ENCODE measurements at regions of chr11 and their contacts with region 1.

Region 1: DNA sequence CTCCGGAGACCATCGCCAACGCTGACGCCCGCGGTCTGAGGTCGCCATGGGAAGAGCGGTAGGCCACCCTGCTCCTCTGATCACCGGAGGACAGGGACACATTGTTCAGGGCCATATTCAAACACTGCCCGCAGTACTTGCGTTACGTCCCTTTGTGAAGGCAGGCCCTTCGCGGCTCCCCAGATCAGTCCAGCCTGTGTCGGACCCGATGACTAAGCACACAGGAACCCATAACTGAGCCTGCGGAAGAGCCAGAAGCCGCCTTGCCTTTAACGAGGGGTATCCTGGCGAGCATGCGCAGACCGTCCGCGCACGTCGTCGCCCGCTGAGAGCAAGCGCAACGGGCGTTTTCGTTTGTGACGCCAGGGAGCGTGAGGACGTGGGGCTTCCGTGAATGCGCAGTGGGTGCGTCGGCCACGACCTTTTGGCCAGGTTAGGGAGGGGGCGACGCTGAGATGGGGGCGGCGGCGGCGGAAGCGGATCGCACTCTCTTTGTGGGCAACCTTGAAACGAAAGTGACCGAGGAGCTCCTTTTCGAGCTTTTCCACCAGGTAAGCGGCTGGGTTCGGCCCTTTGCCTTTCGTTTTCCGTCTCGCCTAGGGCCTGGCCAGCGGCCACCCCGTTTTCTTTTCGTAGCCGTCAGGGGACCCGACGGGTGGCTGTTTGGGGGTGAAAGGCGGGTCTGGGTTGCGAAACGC is at the starts of genes C11orf71 and RBM7:
- DNase-seq: peak; percentile 99
- H3K4me3 ChIP-seq: peak within 1 kb of the TSS; percentile 73 to 88 (median 78)
- H3K27ac ChIP-seq: peak within 1 kb of the TSS; percentile 95 to 98 (median 98)
- H3K4me1 ChIP-seq: peaks cover 41 to 67% (median 60%) of the 10 kb centered on the region in 4 donors
- H3K27me3 ChIP-seq: no peaks in the 10 kb centered on the region
- CTCF ChIP-seq: peak in 1 of 3 experiments; percentile 17
- EP300 ChIP-seq: no peak
- POLR2A ChIP-seq: peak; percentile 76
- total RNA-seq, gene C11orf71: 5.0 to 6.2 (median 5.6) TPM
- total RNA-seq, gene RBM7: 13.7 to 28.0 (median 17.6) TPM

Region 2: DNA sequence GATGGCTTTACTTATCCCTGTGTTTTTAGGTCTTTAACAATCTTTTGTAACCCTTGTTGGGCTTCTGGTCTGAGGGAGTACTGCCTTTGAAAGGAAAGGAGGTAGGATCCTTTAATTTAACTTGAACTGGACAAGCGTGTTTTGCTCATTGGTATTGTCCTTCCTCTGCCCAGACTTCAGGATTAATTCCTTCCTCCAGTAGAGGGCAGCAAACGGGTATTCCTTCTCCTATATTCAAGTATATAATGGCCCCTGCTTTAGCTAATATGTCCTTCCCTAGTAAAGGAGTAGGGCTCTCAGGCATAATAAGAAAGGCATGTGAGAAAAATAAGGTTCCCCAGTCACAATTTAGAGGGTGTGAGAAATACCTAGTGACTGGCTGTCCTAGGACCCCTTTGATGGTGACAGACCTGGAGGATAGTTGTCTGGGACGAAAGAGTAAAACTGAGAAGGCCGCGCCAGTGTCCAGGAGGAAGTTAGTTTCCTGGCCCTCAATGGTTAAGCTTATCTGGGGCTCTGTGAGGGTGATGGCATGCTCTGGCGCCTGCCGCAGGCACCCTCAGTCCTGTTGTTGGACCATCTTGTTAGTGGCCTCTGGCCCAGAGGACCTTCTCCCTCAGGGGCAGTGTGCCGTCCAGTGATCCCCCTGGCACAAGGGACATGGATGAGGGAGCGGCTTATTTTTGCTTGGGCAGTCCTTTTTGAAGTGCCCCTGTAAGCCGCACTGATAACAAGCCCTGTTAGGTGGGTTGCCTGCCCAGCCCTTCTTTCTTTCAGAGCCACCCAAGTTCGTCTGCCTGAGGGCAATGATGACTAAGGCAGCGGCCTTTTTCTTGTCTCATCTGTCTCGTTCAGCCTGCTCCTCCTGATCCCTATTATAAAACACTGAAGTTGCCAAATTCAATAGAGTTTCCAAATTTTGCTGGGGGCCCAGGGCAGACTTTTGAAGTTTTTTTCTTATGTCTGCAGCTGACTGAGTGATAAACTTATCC is 51.9 kb before region 1 on chr11:
- intact Hi-C with region 1: loop called (anchors 5 kb)
- DNase-seq: no peak
- H3K4me3 ChIP-seq: no peak overlapping the region
- H3K27ac ChIP-seq: no peak overlapping the region
- H3K4me1 ChIP-seq: no peaks in the 10 kb centered on the region
- H3K27me3 ChIP-seq: no peaks in the 10 kb centered on the region
- CTCF ChIP-seq: peak; percentile 43 to 64 (median 54)
- EP300 ChIP-seq: no peak
- POLR2A ChIP-seq: no peak

Region 3: DNA sequence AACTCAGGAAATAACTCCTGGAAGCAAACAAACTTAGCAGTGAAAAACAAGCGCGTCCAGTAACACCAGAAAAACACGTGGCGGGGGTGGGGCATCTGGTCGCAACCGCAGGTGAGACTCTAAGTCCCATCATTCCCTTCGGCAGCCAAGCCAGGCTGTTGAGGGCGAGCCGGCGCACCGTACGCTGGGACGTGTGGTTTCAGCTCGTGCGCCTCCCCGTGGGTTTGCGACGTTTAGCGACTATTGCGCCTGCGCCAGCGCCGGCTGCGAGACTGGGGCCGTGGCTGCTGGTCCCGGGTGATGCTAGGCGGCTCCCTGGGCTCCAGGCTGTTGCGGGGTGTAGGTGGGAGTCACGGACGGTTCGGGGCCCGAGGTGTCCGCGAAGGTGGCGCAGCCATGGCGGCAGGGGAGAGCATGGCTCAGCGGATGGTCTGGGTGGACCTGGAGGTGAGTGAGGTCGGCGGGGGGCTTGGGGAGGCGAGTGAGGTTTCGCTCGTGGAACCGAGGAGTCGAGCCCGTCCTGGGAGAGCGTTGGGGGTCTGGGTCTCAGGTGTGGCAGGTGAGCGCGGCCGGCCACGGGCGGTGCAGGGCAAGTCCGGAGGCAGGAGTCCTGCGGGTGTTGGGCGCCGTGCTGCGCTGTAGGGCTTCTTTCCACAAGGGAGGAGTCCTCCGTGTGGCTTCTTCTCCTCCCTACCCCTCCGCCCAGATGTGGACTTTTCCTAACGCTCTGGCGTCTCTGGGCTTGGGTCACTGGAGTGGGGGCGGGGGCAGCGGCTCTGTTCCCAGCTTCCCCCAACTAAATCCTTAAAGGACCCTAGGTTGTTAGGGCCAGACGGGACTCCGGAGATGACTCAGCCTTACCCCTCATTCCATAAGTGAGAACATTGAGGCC is 39.1 kb after region 1 on chr11 and contains the start of gene REXO2:
- intact Hi-C with region 1: loop called (anchors 2 kb)
- DNase-seq: peak; percentile 98
- H3K4me3 ChIP-seq: peak within 1 kb of the TSS; percentile 79 to 96 (median 92)
- H3K27ac ChIP-seq: peak within 1 kb of the TSS; percentile 86 to 89 (median 88)
- H3K4me1 ChIP-seq: peaks cover 11 to 35% (median 30%) of the 10 kb centered on the region in 4 donors
- H3K27me3 ChIP-seq: no peaks in the 10 kb centered on the region
- CTCF ChIP-seq: peak in 2 of 3 experiments; percentile 34 to 37
- EP300 ChIP-seq: no peak
- POLR2A ChIP-seq: peak; percentile 50
- total RNA-seq, gene REXO2: 95.1 to 152 (median 142) TPM

Measured in esophagus muscularis mucosa (tissue), 4 donors.